ENCODE measurements at regions of chr10 and their contacts with region 1.

Region 1: DNA sequence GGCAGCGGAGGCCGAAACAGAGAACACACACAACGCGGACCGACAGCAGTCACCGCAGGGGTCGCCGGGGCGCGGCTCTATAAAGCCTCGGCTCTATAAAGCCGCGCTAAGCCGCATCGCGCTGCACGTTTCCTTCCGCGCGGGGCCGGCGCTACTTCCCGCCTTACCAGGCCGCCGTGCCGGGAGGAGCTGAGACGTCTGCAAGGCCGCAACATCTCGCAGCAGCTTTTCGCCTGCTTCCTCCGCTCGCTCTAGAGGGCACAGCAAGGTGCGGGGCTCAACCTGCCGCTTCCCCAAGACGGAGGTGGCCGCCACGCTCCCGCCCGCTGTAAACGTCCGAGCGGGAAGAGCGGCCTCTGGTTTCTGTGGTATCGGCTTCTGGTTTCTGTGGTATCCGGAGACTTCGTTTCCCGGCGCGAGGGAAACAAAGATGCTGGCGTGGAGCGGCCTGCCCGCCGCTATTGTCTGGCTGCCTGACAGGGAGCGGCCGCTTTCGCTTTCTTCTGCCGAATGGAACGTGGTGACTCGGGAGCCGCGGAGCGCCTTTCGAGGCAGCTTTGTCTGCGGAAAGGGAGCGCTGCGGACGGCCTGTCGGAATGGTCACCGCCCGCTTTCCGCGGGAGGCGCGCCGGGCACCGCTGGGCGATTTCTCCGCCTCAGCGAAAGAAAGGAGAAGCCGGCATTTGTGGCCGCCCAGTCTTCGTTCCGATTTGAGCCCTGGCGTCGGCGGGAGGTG is 91.8 kb downstream of the SPAG6 start:
- DNase-seq: peak; percentile 84 to 91 (median 88)
- H3K4me3 ChIP-seq: peak overlapping the region; percentile 48 to 93 (median 80)
- H3K27ac ChIP-seq: peak overlapping the region; percentile 78 to 99 (median 98)
- H3K27me3 ChIP-seq: no peaks in the 10 kb centered on the region
- CTCF ChIP-seq: peak in 43 of 56 donors; percentile 9 to 55 (median 31)

Region 2: DNA sequence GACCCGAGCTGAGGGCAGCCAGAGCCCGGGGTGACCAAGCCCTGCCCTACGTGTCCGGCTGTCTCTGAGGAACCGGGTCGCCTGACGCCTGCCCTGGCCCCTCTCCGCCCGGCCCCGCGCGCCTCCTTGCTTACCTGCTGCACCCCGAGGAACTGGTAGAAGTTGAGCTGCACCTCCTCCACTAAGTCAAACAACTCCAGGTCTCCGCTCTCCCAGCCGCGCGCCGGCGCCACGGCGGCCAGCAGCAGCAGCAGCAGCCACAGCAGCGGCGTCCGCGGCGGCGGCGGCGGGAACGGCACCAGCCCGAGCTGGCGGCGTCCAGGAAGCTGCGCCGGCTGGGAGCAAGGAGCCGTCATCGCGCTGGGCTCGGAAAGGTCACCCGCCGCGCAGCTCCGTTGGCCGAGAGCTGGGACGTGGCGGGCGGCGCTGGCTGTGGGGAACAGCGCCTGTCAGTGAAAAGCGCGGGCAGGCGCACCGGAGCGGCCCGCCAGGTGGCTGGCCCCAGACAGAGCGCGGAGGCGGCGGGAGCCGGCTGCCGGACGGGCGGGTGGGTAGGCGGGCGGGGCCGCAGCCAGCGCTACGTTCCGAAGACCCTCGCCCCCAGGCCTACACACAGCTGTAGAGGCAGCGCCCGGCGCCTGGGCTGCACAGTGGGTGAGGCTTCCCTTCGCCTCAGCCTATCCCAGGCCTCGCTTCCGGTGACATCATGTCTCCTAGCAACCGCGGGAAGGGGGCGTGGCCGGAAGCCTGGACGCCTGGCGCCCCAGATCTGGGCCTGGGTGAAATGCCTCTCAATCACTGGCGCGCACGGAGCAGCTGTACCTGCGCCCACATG is 433.8 kb before region 1 on chr10 and contains the start of gene DNAJC1:
- intact Hi-C with region 1: loop called (anchors 10 kb)
- DNase-seq: peak; percentile 96 to 99 (median 98)
- H3K4me3 ChIP-seq: peak within 1 kb of the TSS; percentile 68 to 95 (median 83)
- H3K27ac ChIP-seq: peak within 1 kb of the TSS; percentile 49 to 95 (median 88)
- H3K27me3 ChIP-seq: no peaks in the 10 kb centered on the region
- CTCF ChIP-seq: peak in 39 of 56 donors; percentile 3 to 55 (median 26)
- total RNA-seq, gene DNAJC1: 9.1 to 29.3 (median 17.3) TPM

Region 3: DNA sequence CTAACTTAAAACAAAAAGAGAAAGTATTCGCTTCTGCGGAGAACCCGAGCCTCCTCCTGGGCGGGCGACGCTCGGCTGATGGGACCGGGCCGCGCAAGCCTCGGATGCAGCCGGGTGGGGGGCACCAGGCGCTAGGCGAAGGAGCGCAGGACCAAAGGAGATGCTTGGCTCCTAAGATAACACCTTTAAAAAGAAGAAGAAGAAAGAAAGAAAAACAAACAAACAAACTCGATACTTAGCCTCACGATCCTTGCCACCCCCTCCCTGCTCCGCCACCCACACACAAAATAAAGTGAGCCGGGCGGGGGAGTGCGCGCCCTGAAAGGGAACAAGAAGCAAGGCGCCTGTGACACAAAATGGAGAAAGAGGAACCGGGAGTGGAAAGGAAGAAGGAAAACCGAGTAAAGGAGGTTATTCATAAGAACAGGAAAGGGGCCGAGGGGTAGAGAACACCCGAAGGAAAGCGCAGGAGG is 185.3 kb before region 1 on chr10:
- intact Hi-C with region 1: loop called (anchors 1 to 5 kb)
- DNase-seq: peak; percentile 28 to 68 (median 64)
- H3K4me3 ChIP-seq: peak overlapping the region; percentile 56 to 96 (median 81)
- H3K27ac ChIP-seq: peak overlapping the region; percentile 97 to 100 (median 99)
- H3K27me3 ChIP-seq: no peaks in the 10 kb centered on the region
- CTCF ChIP-seq: peak in 1 of 56 donors; percentile 11

Region 4: GRCh38 chr10:22340362-22341189 is 96.5 kb before region 1 on chr10:
- intact Hi-C with region 1: loop called (anchors 5 kb)
- DNase-seq: peak in 8 of 10 donors; percentile 34 to 72 (median 52)
- H3K4me3 ChIP-seq: peak overlapping the region; percentile 62 to 91 (median 80)
- H3K27ac ChIP-seq: peak overlapping the region; percentile 83 to 99 (median 95)
- H3K27me3 ChIP-seq: peaks cover 6 to 95% (median 69%) of the 10 kb centered on the region in 45 donors
- CTCF ChIP-seq: peak in 12 of 56 donors; percentile 1 to 34 (median 8)

Region 5: GRCh38 chr10:22534849-22535604 is 98.0 kb after region 1 on chr10:
- intact Hi-C with region 1: loop called (anchors 5 to 10 kb)
- DNase-seq: no peak
- H3K4me3 ChIP-seq: peak overlapping the region in 1 of 59 donors; percentile 5
- H3K27ac ChIP-seq: peak overlapping the region in 57 of 59 donors; percentile 0 to 92 (median 70)
- H3K27me3 ChIP-seq: no peaks in the 10 kb centered on the region
- CTCF ChIP-seq: no peak

Region 6: GRCh38 chr10:22704471-22704911 is 267.4 kb after region 1 on chr10:
- intact Hi-C with region 1: loop called in 1 of 2 experiments (anchors 10 kb)
- DNase-seq: no peak
- H3K4me3 ChIP-seq: peak overlapping the region in 11 of 59 donors; percentile 0 to 28 (median 6)
- H3K27ac ChIP-seq: peak overlapping the region in 23 of 59 donors; percentile 4 to 96 (median 46)
- H3K27me3 ChIP-seq: no peaks in the 10 kb centered on the region
- CTCF ChIP-seq: no peak